ENCODE measurements at regions of chr9 and their contacts with region 1.

Region 1: GRCh38 chr9:127968717-127969383 is 11.9 kb downstream of the EEIG1 start:
- DNase-seq: no peak

Region 2: GRCh38 chr9:128103589-128103962 is 134.7 kb after region 1 on chr9:
- intact Hi-C with region 1: loop called in 1 of 2 experiments (anchors 10 kb)
- DNase-seq: no peak